AG04450 (cell line): ENCODE measurements at regions of chr1 and their contacts with region 1.

Region 1: GRCh38 chr1:112358798-112359408 is 37.1 kb upstream of the CTTNBP2NL start:
- DNase-seq: peak; percentile 15
- H3K4me3 ChIP-seq: no peak overlapping the region
- H3K27ac ChIP-seq: peak overlapping the region; percentile 93
- H3K27me3 ChIP-seq: peaks cover 33% of the 10 kb centered on the region
- CTCF ChIP-seq: peak; percentile 86

Region 2: DNA sequence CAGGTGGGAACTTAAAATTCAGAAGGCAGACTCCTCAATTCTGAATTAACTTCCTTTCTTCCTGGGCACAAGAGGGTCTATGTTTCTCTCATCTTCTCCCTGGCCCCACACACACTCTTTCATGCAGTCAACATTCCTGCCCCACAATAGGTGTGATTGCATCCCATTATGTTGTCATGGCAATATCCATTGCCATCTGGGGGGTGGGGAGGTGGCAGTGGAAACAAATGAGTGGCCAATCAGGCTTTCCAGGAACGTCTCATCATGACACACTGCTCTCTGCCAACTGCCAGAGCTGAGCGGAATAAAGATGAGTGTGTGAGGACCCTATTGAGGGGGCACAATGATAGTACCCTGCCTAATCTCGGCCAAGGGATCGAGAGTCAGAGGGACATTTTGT is 449.9 kb before region 1 on chr1:
- CTCF ChIA-PET with region 1: no interaction called
- POLR2A ChIA-PET with region 1: no interaction called
- DNase-seq: no peak
- H3K4me3 ChIP-seq: no peak overlapping the region
- H3K27ac ChIP-seq: no peak overlapping the region
- H3K27me3 ChIP-seq: no peaks in the 10 kb centered on the region
- CTCF ChIP-seq: no peak

Region 3: GRCh38 chr1:112165375-112165774 is 193.5 kb before region 1 on chr1:
- CTCF ChIA-PET with region 1: no interaction called
- POLR2A ChIA-PET with region 1: no interaction called
- DNase-seq: no peak
- H3K4me3 ChIP-seq: no peak overlapping the region
- H3K27ac ChIP-seq: no peak overlapping the region
- H3K27me3 ChIP-seq: no peaks in the 10 kb centered on the region
- CTCF ChIP-seq: no peak

Region 4: GRCh38 chr1:112346801-112347350 is 12.0 kb before region 1 on chr1:
- CTCF ChIA-PET with region 1: interaction called, 10 read pairs
- POLR2A ChIA-PET with region 1: no interaction called
- DNase-seq: no peak
- H3K4me3 ChIP-seq: no peak overlapping the region
- H3K27ac ChIP-seq: no peak overlapping the region
- H3K27me3 ChIP-seq: peaks cover 10% of the 10 kb centered on the region
- CTCF ChIP-seq: no peak

Region 5: GRCh38 chr1:112369392-112370285 is 10.7 kb after region 1 on chr1:
- CTCF ChIA-PET with region 1: interaction called, 181 read pairs
- POLR2A ChIA-PET with region 1: interaction called, 4 read pairs
- DNase-seq: peak; percentile 44
- H3K4me3 ChIP-seq: no peak overlapping the region
- H3K27ac ChIP-seq: no peak overlapping the region
- H3K27me3 ChIP-seq: peaks cover 24% of the 10 kb centered on the region
- CTCF ChIP-seq: peak; percentile 99

Region 6: DNA sequence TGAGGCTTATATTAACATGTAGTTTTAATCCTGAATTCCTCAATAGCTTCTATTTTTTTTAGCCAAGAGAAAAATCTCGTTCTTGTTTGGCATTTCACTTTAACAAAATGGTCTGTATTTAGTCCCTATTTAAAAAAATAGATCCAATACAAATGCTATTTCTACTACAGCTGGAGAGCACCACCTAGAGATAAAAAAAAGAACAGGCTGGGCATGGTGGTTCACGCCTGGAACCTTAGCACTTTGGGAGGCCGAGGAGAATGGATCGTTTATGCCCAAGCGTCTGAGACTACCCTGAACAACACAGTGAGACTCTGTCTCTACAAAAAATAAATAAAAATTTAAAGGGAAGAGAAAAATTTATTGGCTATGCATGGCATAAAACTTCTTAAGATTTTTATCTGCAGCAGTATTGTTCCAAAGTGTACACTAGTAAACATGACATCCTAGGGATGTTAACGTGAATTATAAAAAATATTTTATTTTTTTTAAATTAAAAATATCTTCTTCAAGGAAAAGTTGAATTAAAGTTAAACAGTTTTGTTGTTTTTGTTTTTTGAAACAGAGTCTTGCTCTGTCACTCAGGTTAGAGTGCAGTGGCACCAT is 255.7 kb after region 1 on chr1:
- CTCF ChIA-PET with region 1: interaction called, 13 read pairs
- POLR2A ChIA-PET with region 1: interaction called, 4 read pairs
- DNase-seq: peak; percentile 11
- H3K4me3 ChIP-seq: no peak overlapping the region
- H3K27ac ChIP-seq: no peak overlapping the region
- H3K27me3 ChIP-seq: no peaks in the 10 kb centered on the region
- CTCF ChIP-seq: peak; percentile 82